ENCODE measurements at regions of chr6 and their contacts with region 1.

Region 1: DNA sequence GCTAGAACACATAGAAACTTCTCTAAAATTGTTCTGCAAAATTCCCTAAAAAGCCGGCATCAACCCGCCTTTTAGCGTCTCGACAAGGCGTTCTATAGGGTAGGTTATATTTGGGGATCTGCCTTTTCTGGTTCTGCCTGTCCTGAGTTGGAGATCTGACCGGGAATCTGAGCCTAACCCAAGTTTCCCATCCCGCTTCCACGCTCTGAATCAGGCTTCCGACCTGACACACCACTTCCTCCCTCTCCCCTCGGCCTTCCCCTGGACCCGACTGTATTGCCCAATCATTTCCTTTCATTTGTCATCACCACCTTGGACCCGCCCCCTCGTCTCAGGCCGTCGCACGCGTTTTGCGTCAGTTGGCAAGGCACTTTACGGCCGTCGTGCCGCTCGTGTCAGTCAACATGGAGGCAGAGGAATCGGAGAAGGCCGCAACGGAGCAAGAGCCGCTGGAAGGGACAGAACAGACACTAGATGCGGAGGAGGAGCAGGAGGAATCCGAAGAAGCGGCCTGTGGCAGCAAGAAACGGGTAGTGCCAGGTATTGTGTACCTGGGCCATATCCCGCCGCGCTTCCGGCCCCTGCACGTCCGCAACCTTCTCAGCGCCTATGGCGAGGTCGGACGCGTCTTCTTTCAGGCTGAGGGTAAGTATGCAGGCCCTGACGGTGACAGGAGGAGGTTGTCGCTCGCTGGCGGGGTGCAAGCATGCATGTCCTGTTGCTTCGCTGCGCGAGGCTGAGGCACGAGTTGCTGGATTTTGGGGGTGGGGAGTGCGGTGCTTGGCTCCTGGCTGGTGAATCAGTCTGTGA is at the start of gene ABT1:
- DNase-seq: peak; percentile 94 to 99 (median 98)
- H3K4me3 ChIP-seq: peak within 1 kb of the TSS; percentile 68 to 100 (median 95)
- H3K27ac ChIP-seq: peak within 1 kb of the TSS; percentile 58 to 97 (median 89)
- H3K27me3 ChIP-seq: peaks cover 0 to 26% (median 2%) of the 10 kb centered on the region in 45 donors
- CTCF ChIP-seq: peak in 21 of 56 donors; percentile 9 to 53 (median 30)
- total RNA-seq, gene ABT1: 5.9 to 11.3 (median 8.3) TPM

Region 2: DNA sequence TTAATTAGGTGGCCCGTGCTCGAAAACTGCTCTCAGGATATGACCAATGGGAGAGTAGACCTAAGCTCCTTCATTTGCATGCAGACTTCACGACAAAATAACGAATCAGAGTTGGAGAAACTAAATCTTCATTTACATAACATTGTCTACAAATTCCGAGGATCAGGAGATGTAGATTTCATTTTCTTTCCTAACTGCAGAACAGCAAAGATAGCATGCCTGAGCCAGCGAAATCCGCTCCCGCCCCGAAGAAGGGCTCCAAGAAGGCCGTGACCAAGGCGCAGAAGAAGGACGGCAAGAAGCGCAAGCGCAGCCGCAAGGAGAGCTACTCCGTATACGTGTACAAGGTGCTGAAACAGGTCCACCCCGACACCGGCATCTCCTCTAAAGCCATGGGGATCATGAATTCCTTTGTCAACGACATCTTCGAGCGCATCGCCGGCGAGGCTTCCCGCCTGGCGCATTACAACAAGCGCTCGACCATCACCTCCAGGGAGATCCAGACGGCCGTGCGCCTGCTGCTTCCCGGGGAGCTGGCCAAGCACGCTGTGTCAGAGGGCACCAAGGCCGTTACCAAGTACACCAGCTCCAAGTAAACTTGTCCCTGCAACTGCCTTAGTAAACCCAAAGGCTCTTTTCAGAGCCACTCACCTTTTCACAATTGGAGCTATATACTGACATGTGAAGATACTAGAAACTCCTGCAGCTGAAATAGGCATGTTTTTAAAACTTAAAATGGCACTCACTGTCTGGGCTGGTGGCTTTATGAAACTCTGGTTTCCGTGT is 413.0 kb before region 1 on chr6:
- intact Hi-C with region 1: loop called (anchors 10 kb)
- DNase-seq: peak; percentile 39 to 75 (median 66)
- H3K4me3 ChIP-seq: peak overlapping the region; percentile 34 to 81 (median 64)
- H3K27ac ChIP-seq: peak overlapping the region in 57 of 59 donors; percentile 2 to 90 (median 81)
- H3K27me3 ChIP-seq: peaks cover 0 to 6% (median 0%) of the 10 kb centered on the region in 45 donors
- CTCF ChIP-seq: no peak

Region 3: DNA sequence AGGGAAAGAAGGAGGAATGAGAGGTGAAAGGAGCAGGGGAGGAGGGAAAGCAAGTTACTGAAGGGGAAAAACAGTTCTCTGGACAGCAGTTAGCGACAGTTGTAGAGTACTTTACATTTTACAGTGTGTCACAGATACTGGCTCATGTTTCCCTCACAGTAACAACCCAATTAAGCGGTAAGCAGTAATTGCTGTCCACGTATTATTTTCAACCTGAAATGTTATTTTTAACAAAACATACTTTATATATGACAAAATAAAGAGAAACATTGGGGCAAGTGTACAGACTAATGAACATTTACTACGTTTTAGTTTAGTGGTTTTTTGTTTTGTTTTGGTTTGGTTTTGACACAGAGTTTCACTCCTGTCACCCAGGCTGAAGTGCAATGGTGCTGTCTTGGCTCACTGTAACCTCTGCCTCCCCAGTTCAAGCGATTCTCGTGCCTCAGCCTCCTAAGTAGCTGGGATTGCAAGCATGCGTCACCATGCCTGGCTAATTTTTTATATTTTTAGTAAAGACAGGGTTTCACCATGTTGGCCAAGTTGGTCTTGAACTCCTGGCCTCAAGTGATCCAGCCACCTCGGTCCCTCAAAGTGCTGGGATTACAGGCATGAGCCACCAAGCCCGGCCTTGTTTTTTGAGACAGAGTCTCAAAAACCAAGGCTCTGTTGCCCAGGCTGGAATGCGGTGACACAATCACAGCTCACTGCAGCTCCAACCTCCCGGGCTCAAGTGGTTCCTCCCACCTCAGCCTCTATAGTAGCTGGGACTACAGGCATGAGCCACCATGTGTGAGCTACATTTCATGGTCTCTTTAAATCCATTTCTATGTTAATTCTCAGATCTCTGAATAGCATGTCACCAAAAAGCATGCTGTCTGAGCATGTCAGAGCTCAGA is 254.4 kb before region 1 on chr6:
- intact Hi-C with region 1: loop called (anchors 2 to 5 kb)
- DNase-seq: no peak
- H3K4me3 ChIP-seq: peak overlapping the region in 28 of 59 donors; percentile 2 to 47 (median 26)
- H3K27ac ChIP-seq: no peak overlapping the region
- H3K27me3 ChIP-seq: peaks cover 0 to 16% (median 0%) of the 10 kb centered on the region in 45 donors
- CTCF ChIP-seq: no peak

Region 4: GRCh38 chr6:26568601-26569432 is 28.0 kb before region 1 on chr6:
- intact Hi-C with region 1: loop called (anchors 1 to 2 kb)
- DNase-seq: peak; percentile 89 to 97 (median 94)
- H3K4me3 ChIP-seq: peak overlapping the region; percentile 42 to 87 (median 68)
- H3K27ac ChIP-seq: peak overlapping the region; percentile 52 to 97 (median 90)
- H3K27me3 ChIP-seq: no peaks in the 10 kb centered on the region
- CTCF ChIP-seq: peak in 13 of 56 donors; percentile 6 to 29 (median 13)

Region 5: DNA sequence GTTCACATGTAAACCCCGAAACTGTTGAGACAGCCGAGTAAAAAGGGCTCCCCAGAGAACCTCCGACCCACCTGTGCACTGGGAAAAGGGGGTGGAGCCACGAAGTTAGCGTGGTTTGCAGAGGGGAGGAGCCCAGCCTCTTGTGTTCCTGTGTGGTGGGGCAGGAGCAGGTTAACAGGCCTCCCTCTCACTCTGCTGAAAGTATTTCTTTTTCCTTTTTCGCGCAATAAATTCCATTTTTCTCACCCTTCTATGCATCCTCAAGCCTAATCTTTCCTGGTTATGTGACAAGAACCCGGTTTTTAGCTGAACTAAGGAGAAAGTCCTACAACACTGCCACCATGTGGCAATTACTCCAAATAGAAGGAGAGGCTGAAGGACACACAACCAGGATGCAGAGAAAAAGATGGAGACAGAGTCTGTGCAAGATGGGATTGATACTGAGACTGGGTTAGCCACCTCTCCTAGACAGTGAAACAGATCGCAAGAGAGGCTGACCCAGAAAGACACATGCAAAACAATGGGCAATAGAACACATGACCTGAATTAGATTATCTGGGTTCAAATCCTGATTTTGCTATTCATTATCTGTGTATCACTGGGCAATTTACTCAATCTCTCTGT is 482.1 kb after region 1 on chr6:
- intact Hi-C with region 1: loop called in 1 of 2 experiments (anchors 5 kb)
- DNase-seq: peak in 3 of 10 donors; percentile 23 to 57 (median 27)
- H3K4me3 ChIP-seq: peak overlapping the region in 55 of 59 donors; percentile 3 to 63 (median 44)
- H3K27ac ChIP-seq: peak overlapping the region in 1 of 59 donors; percentile 44
- H3K27me3 ChIP-seq: peaks cover 0 to 9% (median 0%) of the 10 kb centered on the region in 45 donors
- CTCF ChIP-seq: peak; percentile 36 to 88 (median 75)

Region 6: DNA sequence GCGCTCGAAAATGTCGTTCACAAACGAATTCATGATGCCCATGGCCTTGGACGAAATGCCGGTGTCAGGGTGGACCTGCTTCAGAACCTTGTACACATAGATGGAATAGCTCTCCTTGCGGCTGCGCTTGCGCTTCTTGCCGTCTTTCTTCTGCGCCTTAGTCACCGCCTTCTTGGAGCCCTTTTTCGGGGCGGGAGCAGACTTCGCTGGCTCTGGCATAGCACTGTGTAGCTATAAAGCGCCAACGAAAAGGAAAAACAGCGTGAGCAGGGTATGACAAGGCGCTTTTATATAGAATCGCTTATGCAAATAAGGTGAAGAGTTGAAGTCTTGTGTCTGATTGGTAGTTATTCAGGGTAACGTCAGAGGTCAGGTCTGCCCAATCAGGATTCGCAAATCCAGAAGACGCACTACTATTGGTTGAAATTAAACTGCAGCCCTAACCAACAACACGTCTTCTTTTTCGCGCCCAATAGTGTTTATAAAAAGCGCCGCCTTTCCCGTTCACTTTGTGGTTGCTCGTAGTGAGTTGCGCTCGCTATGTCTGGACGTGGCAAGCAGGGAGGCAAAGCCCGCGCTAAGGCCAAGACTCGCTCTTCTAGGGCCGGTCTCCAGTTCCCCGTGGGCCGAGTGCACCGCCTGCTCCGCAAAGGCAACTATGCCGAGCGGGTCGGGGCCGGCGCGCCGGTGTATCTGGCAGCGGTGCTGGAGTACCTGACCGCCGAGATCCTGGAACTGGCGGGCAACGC is 535.9 kb after region 1 on chr6:
- intact Hi-C with region 1: loop called in 1 of 2 experiments (anchors 5 kb)
- DNase-seq: peak in 9 of 10 donors; percentile 64 to 92 (median 79)
- H3K4me3 ChIP-seq: peak overlapping the region; percentile 42 to 75 (median 64)
- H3K27ac ChIP-seq: peak overlapping the region in 56 of 59 donors; percentile 3 to 89 (median 78)
- H3K27me3 ChIP-seq: peaks cover 0 to 47% (median 8%) of the 10 kb centered on the region in 45 donors
- CTCF ChIP-seq: peak in 4 of 56 donors; percentile 6 to 19 (median 14)